Colonic mucosa (tissue), 4 donors: ENCODE measurements at regions of chr9 and their contacts with region 1.

Region 1: DNA sequence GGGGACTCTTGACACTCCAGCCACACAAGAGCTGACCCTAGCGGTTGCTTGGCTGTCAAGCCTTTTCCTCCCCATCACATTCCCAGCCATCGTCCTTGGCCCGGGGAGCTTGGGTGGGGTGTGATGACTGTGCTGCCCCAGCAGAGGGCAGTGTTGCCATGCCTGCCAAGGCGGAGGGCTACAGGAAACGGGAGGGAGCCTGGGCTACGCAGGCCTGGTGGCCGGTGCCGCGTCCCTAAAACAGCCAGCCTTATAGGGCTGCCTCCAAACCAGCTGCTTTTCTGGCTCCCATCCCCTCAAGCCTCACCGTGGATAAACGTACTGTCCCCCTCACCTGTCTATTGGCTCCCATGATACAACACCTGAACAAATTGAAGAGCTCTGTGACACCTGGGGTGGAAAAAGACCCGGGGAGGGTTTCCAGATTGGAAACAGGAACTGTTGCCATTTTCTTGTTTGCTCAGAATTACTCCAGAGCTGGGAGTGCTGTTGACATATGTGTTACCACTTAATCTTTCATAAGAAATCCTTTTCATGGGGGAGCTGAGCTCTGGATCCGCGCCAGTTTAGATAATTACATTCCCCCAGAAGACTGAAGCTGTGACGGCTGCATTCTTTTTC is 72.8 kb upstream of the ASTN2 start:
- DNase-seq: peak; percentile 71
- H3K4me3 ChIP-seq: no peak overlapping the region
- H3K27ac ChIP-seq: no peak overlapping the region
- H3K4me1 ChIP-seq: no peaks in the 10 kb centered on the region
- H3K27me3 ChIP-seq: no peaks in the 10 kb centered on the region
- CTCF ChIP-seq: peak; percentile 91

Region 2: GRCh38 chr9:117555964-117556629 is 68.4 kb after region 1 on chr9:
- intact Hi-C with region 1: loop called (anchors 5 kb)
- DNase-seq: peak; percentile 75
- H3K4me3 ChIP-seq: no peak overlapping the region
- H3K27ac ChIP-seq: no peak overlapping the region
- H3K4me1 ChIP-seq: no peaks in the 10 kb centered on the region
- H3K27me3 ChIP-seq: no peaks in the 10 kb centered on the region
- CTCF ChIP-seq: peak; percentile 51

Region 3: DNA sequence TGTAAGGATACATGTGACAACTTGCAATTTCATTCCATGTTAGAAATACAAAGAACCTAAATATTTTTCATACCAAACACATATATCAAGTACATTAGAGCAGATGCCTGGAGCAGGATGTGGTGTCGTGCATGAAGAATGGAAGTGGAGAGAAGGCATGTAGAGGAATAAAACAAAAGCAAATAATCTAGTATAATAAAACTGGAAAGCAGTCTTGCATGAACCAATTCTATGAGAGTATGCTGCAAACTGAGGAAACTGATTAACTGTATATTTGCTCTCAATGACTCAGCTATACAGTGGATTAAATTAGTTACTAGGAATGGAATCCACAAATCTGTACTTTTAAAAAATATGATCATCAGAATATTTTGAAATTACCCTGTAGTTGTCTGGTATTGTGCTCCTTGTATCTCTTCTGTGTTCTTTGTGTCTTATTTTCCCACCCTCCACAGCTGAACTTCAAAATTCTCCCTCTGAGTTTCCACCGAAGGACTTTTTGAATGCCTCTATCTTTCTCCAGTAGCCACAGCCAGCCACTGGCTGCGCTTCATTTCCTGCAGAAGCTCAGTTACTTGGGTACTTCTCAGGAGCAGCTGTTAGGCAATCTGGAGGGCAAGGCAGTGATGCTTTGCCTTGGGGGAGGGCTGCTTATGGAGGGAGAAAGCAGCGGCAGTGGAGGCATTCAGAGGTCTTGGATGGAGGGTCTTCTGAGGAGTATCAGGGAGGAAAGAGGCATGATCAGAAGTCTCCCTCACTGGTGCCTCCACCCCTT is 1273.5 kb after region 1 on chr9:
- intact Hi-C with region 1: no loop called
- DNase-seq: no peak
- H3K4me3 ChIP-seq: no peak overlapping the region
- H3K27ac ChIP-seq: no peak overlapping the region
- H3K4me1 ChIP-seq: no peaks in the 10 kb centered on the region
- H3K27me3 ChIP-seq: no peaks in the 10 kb centered on the region
- CTCF ChIP-seq: no peak